Naive thymus-derived CD4-positive, alpha-beta T cell (primary cell): ENCODE measurements at regions of chr20 and their contacts with region 1.

Region 1: GRCh38 chr20:50115591-50116372 is 2.8 kb upstream of the UBE2V1 start:
- DNase-seq: peak; percentile 69 to 91 (median 87)
- ATAC-seq: peak; percentile 90
- H3K4me3 ChIP-seq: peak overlapping the region; percentile 58
- H3K4me3 Mint-ChIP-seq: peak overlapping the region; percentile 78 to 97 (median 90)
- H3K27ac ChIP-seq: peak overlapping the region; percentile 76
- H3K27ac Mint-ChIP-seq: peak overlapping the region; percentile 70 to 98 (median 92)
- H3K4me1 ChIP-seq: peaks cover 38 to 39% of the 10 kb centered on the region in 2 donors
- H3K4me1 Mint-ChIP-seq: peaks cover 37 to 55% (median 51%) of the 10 kb centered on the region in 7 donors
- H3K27me3 ChIP-seq: no peaks in the 10 kb centered on the region
- H3K27me3 Mint-ChIP-seq: no peaks in the 10 kb centered on the region

Region 2: DNA sequence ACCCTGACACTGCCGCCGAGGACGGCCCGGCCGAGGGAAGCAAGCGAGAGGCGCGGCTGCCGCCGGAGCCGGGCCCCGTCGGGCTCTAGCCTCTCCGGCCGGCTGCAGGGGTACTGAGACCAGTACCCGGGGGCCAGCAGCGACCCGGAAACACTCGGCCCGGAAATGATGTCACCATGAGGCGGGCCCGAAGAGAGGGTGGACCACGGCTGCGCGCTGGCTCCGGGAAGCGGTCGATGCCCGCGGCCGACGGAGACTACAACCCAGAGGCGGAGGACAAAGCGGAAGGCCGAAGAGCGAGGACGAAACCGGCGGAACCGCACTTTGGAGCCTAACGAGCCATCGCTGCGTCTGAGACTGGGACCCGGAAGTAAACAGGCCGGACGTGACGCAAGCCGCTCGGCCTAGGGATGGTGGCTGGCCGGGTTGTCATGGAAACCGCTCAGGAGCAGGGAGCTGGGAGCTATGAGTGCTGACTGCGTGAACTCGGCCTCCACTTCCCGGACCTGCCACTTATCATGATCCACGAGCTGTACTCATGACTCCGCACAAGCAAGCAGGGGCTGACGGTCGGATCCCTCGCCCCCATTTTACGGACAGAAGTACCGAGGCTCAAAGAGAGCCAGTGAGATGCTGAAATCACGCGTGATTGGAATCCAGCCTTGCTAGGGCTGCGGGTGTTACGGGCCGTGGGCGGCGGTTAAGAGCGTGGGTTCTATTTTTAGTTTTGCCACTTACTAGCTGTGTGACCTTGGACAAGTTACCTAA is 200.2 kb before region 1 on chr20 and contains the start of gene SPATA2:
- CTCF ChIA-PET with region 1: no interaction called
- POLR2A ChIA-PET with region 1: no interaction called
- intact Hi-C with region 1: loop called in 1 of 2 experiments (anchors 1 kb)
- DNase-seq: peak; percentile 87 to 99 (median 93)
- ATAC-seq: peak; percentile 88
- H3K4me3 ChIP-seq: peak within 1 kb of the TSS; percentile 93
- H3K4me3 Mint-ChIP-seq: peak within 1 kb of the TSS; percentile 96 to 99 (median 97)
- H3K27ac ChIP-seq: peak within 1 kb of the TSS; percentile 100
- H3K27ac Mint-ChIP-seq: peak within 1 kb of the TSS; percentile 97 to 100 (median 99)
- H3K4me1 ChIP-seq: peaks cover 11 to 16% of the 10 kb centered on the region in 2 donors
- H3K4me1 Mint-ChIP-seq: peaks cover 25 to 48% (median 36%) of the 10 kb centered on the region in 7 donors
- H3K27me3 ChIP-seq: no peaks in the 10 kb centered on the region
- H3K27me3 Mint-ChIP-seq: no peaks in the 10 kb centered on the region
- total RNA-seq, gene SPATA2: 9.0 to 18.4 (median 10.0) TPM

Region 3: DNA sequence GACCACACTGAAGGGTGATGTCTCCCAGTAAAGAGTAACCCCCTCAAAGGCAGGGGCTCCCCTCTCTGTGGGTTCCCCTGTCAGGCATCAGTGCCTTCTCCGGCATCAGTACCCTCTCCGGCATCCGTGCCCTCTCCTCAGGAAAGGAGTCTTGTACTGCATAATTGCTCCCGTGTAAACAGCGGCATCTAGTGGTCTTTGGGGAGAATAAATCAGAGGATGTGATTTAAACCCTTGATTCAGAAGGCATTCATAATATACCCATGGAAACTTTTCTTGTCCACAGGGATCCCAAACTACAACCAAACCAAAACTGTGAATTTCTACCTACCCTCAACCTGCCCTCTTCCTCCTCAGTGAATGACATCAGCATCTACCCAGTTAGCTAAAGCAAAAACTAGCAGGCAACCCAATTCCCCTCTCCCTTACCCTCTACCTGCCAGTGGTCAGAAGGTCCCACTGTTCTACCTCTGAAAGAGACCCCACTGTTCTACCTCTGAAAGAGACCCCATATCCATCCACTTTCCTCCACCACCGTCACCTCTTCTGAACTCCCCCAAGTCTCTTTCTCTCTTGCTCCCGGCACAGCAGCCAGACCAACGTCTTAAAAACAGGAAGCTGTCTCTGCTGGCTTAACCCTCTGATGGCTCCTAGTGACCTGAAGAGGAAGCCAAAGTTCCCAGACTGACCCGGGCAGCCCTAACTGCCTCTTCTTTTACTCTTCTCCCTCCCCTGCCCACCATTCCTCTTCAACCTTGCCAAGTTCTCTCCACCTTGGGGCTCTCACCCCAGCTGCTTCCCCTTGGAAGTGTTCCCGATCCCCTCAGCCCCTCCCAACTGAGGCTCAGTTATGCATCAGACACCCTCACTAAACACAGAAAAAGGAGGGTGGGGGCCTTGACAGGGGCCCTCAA is 30.1 kb before region 1 on chr20:
- CTCF ChIA-PET with region 1: interaction called, 3 read pairs
- POLR2A ChIA-PET with region 1: interaction called, 5 read pairs
- intact Hi-C with region 1: loop called in 1 of 2 experiments (anchors 2 kb)
- DNase-seq: peak in 7 of 9 donors; percentile 29 to 63 (median 50)
- ATAC-seq: peak; percentile 87
- H3K4me3 ChIP-seq: peak overlapping the region; percentile 63
- H3K4me3 Mint-ChIP-seq: peak overlapping the region; percentile 75 to 91 (median 86)
- H3K27ac ChIP-seq: peak overlapping the region; percentile 43
- H3K27ac Mint-ChIP-seq: peak overlapping the region; percentile 64 to 93 (median 85)
- H3K4me1 ChIP-seq: peaks cover 9 to 13% of the 10 kb centered on the region in 2 donors
- H3K4me1 Mint-ChIP-seq: peaks cover 20 to 43% (median 32%) of the 10 kb centered on the region in 7 donors
- H3K27me3 ChIP-seq: no peaks in the 10 kb centered on the region
- H3K27me3 Mint-ChIP-seq: no peaks in the 10 kb centered on the region

Region 4: DNA sequence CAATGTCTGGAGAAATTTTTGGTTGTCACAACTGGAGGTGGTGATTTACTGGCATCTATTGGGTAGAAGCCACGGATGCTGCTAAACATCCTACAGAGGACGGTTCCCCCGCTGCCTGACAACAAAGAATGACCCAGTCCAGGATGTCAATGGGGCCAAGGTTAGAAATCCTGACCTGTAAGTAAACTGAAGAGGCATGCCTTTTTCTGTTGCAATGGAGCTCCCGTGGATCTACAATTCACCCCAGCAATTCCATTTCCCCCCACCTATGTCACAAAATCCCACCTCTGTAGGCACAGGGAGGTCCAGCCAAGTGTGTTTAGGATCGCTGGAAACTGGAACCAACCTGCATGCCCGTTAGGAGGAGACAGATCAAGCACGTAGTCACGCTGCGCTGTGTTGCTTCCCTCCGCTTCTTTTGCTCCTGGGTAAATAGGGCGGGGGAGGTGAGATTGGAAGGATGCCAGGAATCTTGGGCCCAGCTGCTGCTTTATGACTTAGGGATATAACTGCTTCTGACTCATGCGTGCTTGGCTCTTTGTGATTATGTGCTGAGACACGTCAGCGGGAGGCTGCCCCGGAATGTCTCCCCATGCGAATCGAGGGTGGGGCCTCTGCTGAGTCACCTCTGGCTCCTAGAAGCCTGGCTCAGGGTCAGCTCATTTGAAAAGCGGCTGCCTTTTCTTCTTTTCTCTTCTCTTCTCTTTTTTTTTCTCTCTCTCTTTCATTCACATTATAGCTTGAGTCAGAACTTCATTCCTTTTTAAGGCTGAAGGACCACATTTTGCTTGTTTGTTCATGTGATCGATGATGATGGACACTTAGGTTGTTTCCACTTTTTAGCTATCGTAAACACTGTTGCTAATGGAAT is 50.1 kb after region 1 on chr20:
- CTCF ChIA-PET with region 1: interaction called, 236 read pairs
- POLR2A ChIA-PET with region 1: interaction called, 23 read pairs
- intact Hi-C with region 1: no loop called
- DNase-seq: peak in 6 of 9 donors; percentile 15 to 76 (median 36)
- ATAC-seq: peak; percentile 94
- H3K4me3 ChIP-seq: no peak overlapping the region
- H3K4me3 Mint-ChIP-seq: peak overlapping the region; percentile 5 to 86 (median 48)
- H3K27ac ChIP-seq: no peak overlapping the region
- H3K27ac Mint-ChIP-seq: peak overlapping the region in 4 of 9 donors; percentile 14 to 85 (median 44)
- H3K4me1 ChIP-seq: no peaks in the 10 kb centered on the region
- H3K4me1 Mint-ChIP-seq: peaks cover 7 to 16% (median 13%) of the 10 kb centered on the region in 7 donors
- H3K27me3 ChIP-seq: no peaks in the 10 kb centered on the region
- H3K27me3 Mint-ChIP-seq: peaks cover 0 to 10% (median 5%) of the 10 kb centered on the region in 5 donors

Region 5: DNA sequence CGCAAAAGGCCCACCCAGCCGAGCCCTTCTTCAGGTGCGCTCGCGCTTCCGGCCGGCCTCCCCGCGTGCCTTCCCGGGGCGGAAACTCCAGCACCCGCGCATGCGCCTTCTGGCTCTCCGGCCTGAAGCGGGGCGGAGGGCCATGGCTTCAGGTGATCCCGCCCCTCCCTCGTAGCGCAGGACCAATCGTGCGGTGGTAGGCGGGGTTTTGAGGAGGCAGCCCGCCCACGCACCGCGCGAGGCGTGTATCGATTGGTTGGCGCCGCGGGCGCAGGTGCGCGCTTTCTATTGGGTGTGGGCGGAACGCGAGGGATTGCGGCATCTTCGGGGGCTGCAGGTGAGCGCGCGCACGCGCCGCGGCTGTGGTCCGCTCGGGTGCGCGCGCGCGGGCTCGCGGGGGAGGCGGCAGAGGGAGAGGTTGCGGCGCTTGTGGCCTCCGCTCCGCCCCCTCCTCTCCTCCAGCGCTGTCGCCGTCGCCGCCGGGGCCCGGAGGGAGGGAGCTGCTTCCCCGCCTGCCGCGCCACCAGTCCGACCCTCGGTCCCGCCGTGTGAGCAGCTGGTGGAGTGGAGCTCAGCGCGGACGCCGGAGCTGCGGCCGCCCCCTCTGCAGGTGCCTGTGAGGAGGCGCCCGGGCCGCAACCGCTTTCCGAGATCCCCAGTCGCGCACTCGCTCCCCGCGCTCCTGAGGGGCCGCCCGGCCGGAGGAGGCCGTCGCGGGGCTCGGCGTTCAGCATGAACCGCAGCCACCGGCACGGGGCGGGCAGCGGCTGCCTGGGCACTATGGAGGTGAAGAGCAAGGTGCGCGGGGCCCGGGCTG is 615.5 kb after region 1 on chr20 and contains the start of gene PARD6B:
- CTCF ChIA-PET with region 1: no interaction called
- POLR2A ChIA-PET with region 1: no interaction called
- intact Hi-C with region 1: loop called (anchors 1 to 2 kb)
- DNase-seq: peak; percentile 94 to 100 (median 100)
- ATAC-seq: peak; percentile 97
- H3K4me3 ChIP-seq: peak within 1 kb of the TSS; percentile 80
- H3K4me3 Mint-ChIP-seq: peak within 1 kb of the TSS; percentile 79 to 94 (median 88)
- H3K27ac ChIP-seq: peak within 1 kb of the TSS; percentile 80
- H3K27ac Mint-ChIP-seq: peak within 1 kb of the TSS; percentile 75 to 95 (median 83)
- H3K4me1 ChIP-seq: peaks cover 9 to 14% of the 10 kb centered on the region in 2 donors
- H3K4me1 Mint-ChIP-seq: peaks cover 22 to 45% (median 34%) of the 10 kb centered on the region in 7 donors
- H3K27me3 ChIP-seq: no peaks in the 10 kb centered on the region
- H3K27me3 Mint-ChIP-seq: peaks cover 0 to 3% (median 0%) of the 10 kb centered on the region in 5 donors
- total RNA-seq, gene PARD6B: 5.2 to 10.8 (median 7.7) TPM